SK-N-SH (cell line): ENCODE measurements at regions of chr1 and their contacts with region 1.

Region 1: GRCh38 chr1:19341201-19342072 is 29.3 kb downstream of the SLC66A1 start:
- DNase-seq: peak; percentile 89
- H3K4me3 ChIP-seq: no peak overlapping the region; a peak in 1 of 4 replicates
- H3K27ac ChIP-seq: peak overlapping the region in 1 of 2 experiments; percentile 85; a peak in 2 of 4 replicates
- H3K4me1 ChIP-seq: peaks cover 0 to 70% of the 10 kb centered on the region in 2 experiments; a peak in 2 of 4 replicates
- H3K27me3 ChIP-seq: no peaks in the 10 kb centered on the region
- CTCF ChIP-seq: peak; percentile 87
- EP300 ChIP-seq: no peak
- RAD21 ChIP-seq: peak; percentile 57

Region 2: GRCh38 chr1:18883636-18884418 is 457.6 kb before region 1 on chr1:
- CTCF ChIA-PET with region 1: no interaction called
- POLR2A ChIA-PET with region 1: no interaction called
- DNase-seq: peak; percentile 86
- H3K4me3 ChIP-seq: no peak overlapping the region; a peak in 1 of 4 replicates
- H3K27ac ChIP-seq: no peak overlapping the region
- H3K4me1 ChIP-seq: peaks cover 4 to 8% of the 10 kb centered on the region in 2 experiments; a peak in 2 of 4 replicates
- H3K27me3 ChIP-seq: no peaks in the 10 kb centered on the region
- CTCF ChIP-seq: peak; percentile 84
- EP300 ChIP-seq: no peak
- RAD21 ChIP-seq: peak; percentile 82

Region 3: GRCh38 chr1:19300211-19300610 is 41.2 kb before region 1 on chr1:
- CTCF ChIA-PET with region 1: no interaction called
- POLR2A ChIA-PET with region 1: no interaction called
- DNase-seq: no peak
- H3K4me3 ChIP-seq: no peak overlapping the region
- H3K27ac ChIP-seq: no peak overlapping the region
- H3K4me1 ChIP-seq: no peaks in the 10 kb centered on the region
- H3K27me3 ChIP-seq: no peaks in the 10 kb centered on the region
- CTCF ChIP-seq: no peak
- EP300 ChIP-seq: no peak
- RAD21 ChIP-seq: no peak

Region 4: GRCh38 chr1:19353596-19353995 is 12.2 kb after region 1 on chr1:
- CTCF ChIA-PET with region 1: interaction called, 31 read pairs
- POLR2A ChIA-PET with region 1: no interaction called
- DNase-seq: no peak
- H3K4me3 ChIP-seq: no peak overlapping the region
- H3K27ac ChIP-seq: peak overlapping the region in 1 of 2 experiments; percentile 71; a peak in 2 of 4 replicates
- H3K4me1 ChIP-seq: peaks cover 0 to 47% of the 10 kb centered on the region in 2 experiments; a peak in 1 of 4 replicates
- H3K27me3 ChIP-seq: no peaks in the 10 kb centered on the region
- CTCF ChIP-seq: no peak
- EP300 ChIP-seq: no peak
- RAD21 ChIP-seq: no peak

Region 5: GRCh38 chr1:19390901-19391595 is 49.6 kb after region 1 on chr1:
- CTCF ChIA-PET with region 1: interaction called, 11 read pairs
- POLR2A ChIA-PET with region 1: no interaction called
- DNase-seq: peak; percentile 85
- H3K4me3 ChIP-seq: peak overlapping the region; percentile 33 to 56
- H3K27ac ChIP-seq: peak overlapping the region; percentile 80 to 97
- H3K4me1 ChIP-seq: peaks cover 37 to 70% of the 10 kb centered on the region in 2 experiments
- H3K27me3 ChIP-seq: no peaks in the 10 kb centered on the region
- CTCF ChIP-seq: peak; percentile 98
- EP300 ChIP-seq: peak; percentile 76 to 84
- RAD21 ChIP-seq: peak; percentile 77

Region 6: GRCh38 chr1:19439464-19440171 is 98.2 kb after region 1 on chr1:
- CTCF ChIA-PET with region 1: interaction called, 74 read pairs
- POLR2A ChIA-PET with region 1: no interaction called
- DNase-seq: peak; percentile 82
- H3K4me3 ChIP-seq: no peak overlapping the region
- H3K27ac ChIP-seq: peak overlapping the region; percentile 62 to 64
- H3K4me1 ChIP-seq: peaks cover 65 to 72% of the 10 kb centered on the region in 2 experiments
- H3K27me3 ChIP-seq: no peaks in the 10 kb centered on the region
- CTCF ChIP-seq: peak; percentile 53
- EP300 ChIP-seq: no peak
- RAD21 ChIP-seq: peak; percentile 79

Region 7: GRCh38 chr1:19478322-19478721 is 136.9 kb after region 1 on chr1:
- CTCF ChIA-PET with region 1: interaction called, 12 read pairs
- POLR2A ChIA-PET with region 1: no interaction called
- DNase-seq: no peak
- H3K4me3 ChIP-seq: no peak overlapping the region
- H3K27ac ChIP-seq: no peak overlapping the region; a peak in 1 of 4 replicates
- H3K4me1 ChIP-seq: peaks cover 14 to 64% of the 10 kb centered on the region in 2 experiments; a peak in 3 of 4 replicates
- H3K27me3 ChIP-seq: no peaks in the 10 kb centered on the region
- CTCF ChIP-seq: no peak
- EP300 ChIP-seq: no peak
- RAD21 ChIP-seq: no peak